ENCODE measurements at regions of chr5 and their contacts with region 1.

Region 1: GRCh38 chr5:95846554-95847260 is 24.2 kb upstream of the GLRX start:
- DNase-seq: no peak
- ATAC-seq: peak; percentile 72

Region 2: DNA sequence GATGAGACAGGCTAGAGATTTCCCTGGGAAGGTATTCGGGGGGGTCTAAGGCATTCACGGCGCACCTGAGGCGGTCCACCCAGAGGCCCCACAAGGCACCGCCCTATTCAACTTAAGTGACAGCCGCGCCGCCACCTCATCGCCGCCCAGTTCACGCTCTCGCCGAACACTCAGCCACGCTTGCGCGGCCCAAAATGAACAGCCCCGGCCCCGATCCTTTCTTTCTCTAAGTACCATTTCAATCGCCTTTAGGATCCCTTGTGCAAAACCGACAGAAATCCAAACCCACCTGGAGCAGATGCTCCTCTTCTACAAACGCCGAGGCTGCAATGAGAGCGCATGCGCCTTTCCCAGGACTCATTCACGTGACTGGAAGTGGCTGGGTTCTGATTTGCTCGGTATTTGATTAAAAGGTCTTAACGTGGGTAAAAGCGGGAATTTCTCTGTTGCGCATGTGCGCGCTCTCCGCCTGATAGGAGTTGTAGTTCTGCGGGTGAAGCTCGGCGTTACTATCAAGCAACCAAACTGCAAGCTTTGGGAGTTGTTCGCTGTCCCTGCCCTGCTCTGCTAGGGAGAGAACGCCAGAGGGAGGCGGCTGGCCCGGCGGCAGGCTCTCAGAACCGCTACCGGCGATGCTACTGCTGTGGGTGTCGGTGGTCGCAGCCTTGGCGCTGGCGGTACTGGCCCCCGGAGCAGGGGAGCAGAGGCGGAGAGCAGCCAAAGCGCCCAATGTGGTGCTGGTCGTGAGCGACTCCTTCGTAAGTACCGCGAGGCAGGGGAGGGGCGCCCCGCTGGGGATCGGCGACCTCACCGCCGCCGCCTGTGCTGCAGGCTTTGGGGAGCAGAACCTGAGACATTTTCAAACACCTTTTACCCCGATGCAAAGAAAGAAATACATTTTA is 291.8 kb before region 1 on chr5 and contains the starts of genes ARSK and SKIC3:
- intact Hi-C with region 1: loop called (anchors 10 kb)
- DNase-seq: peak; percentile 95
- ATAC-seq: peak; percentile 97
- total RNA-seq, gene ARSK: 4.7 TPM
- total RNA-seq, gene SKIC3: 58.4 TPM

Region 3: GRCh38 chr5:95781101-95781583 is 65.6 kb before region 1 on chr5:
- intact Hi-C with region 1: loop called (anchors 1 kb)
- DNase-seq: peak; percentile 88
- ATAC-seq: peak; percentile 91

Region 4: DNA sequence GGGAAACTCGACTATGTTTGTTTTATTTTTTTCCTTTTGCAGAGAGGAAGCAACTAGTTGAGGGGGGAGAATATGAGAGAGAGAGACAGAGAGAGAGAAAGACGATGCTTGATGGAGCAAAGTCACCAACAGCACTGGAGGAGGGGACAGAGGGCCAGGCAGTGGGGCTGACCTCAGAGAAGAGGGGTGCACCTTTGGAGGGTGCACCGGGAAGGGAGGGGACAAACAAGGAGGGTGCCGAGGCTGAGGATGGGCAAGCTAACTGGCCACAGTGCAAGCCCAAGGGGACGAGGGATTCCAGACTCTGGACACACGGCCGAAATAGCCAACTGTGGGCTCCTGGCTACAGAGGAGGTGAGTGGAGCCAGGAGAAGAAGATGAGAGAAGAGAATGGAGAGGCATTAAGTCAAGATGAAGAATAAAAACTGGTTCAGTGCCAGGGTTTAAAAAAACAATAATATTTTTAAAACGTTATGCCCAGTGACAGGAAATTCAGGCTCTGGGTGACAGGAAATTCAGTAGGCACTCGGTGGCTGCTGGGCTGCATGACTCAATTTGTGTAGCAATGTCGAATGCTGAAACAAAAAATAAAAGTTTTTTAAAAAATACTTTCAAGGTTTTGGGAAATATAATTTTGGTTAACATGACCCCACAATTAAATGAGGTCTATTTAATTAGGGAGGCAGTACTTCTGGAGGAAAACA is 10.9 kb before region 1 on chr5:
- intact Hi-C with region 1: no loop called
- DNase-seq: peak; percentile 70
- ATAC-seq: peak; percentile 9

Region 5: DNA sequence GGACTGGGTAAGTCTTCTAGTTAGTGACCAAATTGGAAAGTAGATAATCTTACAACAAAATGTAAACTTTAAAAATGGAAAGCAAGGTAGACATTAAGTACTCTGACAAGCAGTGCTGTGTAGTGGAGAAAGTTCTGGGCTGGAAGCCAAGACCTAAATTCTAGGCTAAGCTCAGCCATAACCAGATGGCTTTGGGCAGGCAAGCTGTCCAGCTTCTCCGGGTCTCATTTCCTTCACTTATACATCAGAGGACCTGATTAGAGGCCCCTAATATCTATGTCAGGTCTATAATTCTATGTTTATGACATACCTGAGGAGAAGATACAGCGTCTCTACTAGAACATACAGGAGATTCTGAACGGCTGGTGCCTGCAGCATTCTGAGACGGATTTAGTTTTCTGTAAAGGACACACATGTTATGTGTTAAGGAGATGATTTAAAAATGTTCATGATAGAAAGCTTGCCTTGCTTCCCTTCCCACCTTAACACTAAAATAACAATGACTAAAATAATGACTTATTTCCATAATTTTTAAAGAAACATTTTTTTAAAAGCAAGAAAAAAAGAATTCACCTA is 53.8 kb after region 1 on chr5:
- intact Hi-C with region 1: no loop called
- DNase-seq: no peak
- ATAC-seq: peak; percentile 87